ENCODE measurements at regions of chr11 and their contacts with region 1.

Region 1: GRCh38 chr11:74696932-74697687 is 34.1 kb downstream of the CHRDL2 start:
- DNase-seq: no peak
- H3K4me3 ChIP-seq: peak overlapping the region in 1 of 4 experiments; percentile 40; a peak in 2 of 8 replicates
- H3K27ac ChIP-seq: no peak overlapping the region
- H3K4me1 ChIP-seq: peaks cover 0 to 8% (median 3%) of the 10 kb centered on the region in 4 experiments; a peak in 3 of 7 replicates
- H3K27me3 ChIP-seq: no peaks in the 10 kb centered on the region; a peak in 2 of 7 replicates
- CTCF ChIP-seq: no peak
- EP300 ChIP-seq: no peak
- POLR2A ChIP-seq: no peak
- RAD21 ChIP-seq: no peak

Region 2: DNA sequence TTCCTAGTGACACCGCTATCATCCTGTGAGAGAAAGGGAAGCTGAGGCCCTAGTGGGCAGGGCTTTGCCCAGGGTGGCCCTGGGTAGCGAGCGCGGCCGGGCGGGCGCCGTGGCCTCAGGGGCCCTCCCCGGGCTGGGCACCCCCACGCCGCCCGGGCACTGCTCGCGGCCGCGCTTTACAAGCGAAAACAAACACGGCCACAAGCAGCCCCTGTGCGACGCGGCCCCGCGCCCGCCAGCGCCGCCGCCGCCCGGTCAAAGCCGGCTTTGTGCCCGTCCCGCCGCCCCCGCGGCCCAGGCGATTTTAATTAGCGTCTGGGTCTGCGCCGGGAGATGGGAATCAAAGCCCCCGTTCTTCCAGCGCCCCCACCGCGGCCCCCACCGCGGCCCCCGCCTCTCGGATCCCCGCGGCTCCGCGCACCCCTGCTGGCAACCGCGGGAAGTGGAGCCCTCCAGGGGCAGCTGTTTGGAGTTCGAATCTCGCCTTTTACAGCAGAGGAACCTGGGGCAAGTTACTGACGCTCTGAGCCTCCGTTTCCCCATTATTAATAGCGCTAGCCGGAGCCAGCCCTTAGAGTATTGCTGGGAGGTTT is 13.7 kb before region 1 on chr11:
- CTCF ChIA-PET with region 1: interaction called, 72 read pairs
- POLR2A ChIA-PET with region 1: interaction called, 4 read pairs
- DNase-seq: peak in 1 of 2 experiments; percentile 75
- H3K4me3 ChIP-seq: peak overlapping the region; percentile 40 to 64 (median 45)
- H3K27ac ChIP-seq: no peak overlapping the region
- H3K4me1 ChIP-seq: peaks cover 5 to 8% (median 7%) of the 10 kb centered on the region in 4 experiments; a peak in 6 of 7 replicates
- H3K27me3 ChIP-seq: peaks cover 0 to 12% (median 7%) of the 10 kb centered on the region in 4 experiments; a peak in 5 of 7 replicates
- CTCF ChIP-seq: peak in 2 of 3 experiments; percentile 9 to 29; a peak in 1 of 4 replicates
- EP300 ChIP-seq: no peak
- POLR2A ChIP-seq: no peak
- RAD21 ChIP-seq: no peak

Region 3: GRCh38 chr11:74710281-74710938 is 13.3 kb after region 1 on chr11:
- CTCF ChIA-PET with region 1: interaction called, 30 read pairs
- POLR2A ChIA-PET with region 1: no interaction called
- DNase-seq: no peak
- H3K4me3 ChIP-seq: no peak overlapping the region
- H3K27ac ChIP-seq: no peak overlapping the region
- H3K4me1 ChIP-seq: peaks cover 0 to 6% (median 3%) of the 10 kb centered on the region in 4 experiments; a peak in 3 of 7 replicates
- H3K27me3 ChIP-seq: no peaks in the 10 kb centered on the region
- CTCF ChIP-seq: no peak
- EP300 ChIP-seq: no peak
- POLR2A ChIP-seq: no peak
- RAD21 ChIP-seq: no peak

Region 4: GRCh38 chr11:74739546-74740270 is 42.6 kb after region 1 on chr11:
- CTCF ChIA-PET with region 1: interaction called, 26 read pairs
- POLR2A ChIA-PET with region 1: no interaction called
- DNase-seq: peak in 1 of 2 experiments; percentile 46
- H3K4me3 ChIP-seq: no peak overlapping the region
- H3K27ac ChIP-seq: no peak overlapping the region
- H3K4me1 ChIP-seq: no peaks in the 10 kb centered on the region
- H3K27me3 ChIP-seq: no peaks in the 10 kb centered on the region; a peak in 1 of 7 replicates
- CTCF ChIP-seq: peak; percentile 80 to 88 (median 86)
- EP300 ChIP-seq: no peak
- POLR2A ChIP-seq: no peak
- RAD21 ChIP-seq: peak; percentile 67 to 83

Region 5: DNA sequence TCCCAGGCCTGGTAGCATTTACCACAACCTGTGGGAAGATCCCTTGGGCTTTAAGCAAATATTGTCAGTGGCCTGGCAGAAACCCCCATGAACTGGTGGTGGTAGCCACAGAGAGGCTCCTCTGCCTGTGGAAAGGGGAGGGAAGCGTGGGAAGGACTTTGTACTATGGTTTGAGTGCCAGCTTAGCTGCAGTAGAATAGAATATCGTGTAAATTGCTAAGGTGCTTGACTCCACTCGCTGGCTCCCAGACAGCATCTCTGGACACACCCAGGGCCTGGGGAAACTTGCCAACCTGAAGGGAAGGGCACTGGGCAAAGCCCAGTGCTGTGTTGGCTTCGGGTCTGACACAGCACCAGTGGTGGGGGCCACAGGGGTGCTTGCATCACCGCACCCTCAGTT is 199.2 kb after region 1 on chr11:
- CTCF ChIA-PET with region 1: no interaction called
- POLR2A ChIA-PET with region 1: no interaction called
- DNase-seq: no peak
- H3K4me3 ChIP-seq: no peak overlapping the region
- H3K27ac ChIP-seq: no peak overlapping the region
- H3K4me1 ChIP-seq: no peaks in the 10 kb centered on the region
- H3K27me3 ChIP-seq: no peaks in the 10 kb centered on the region
- CTCF ChIP-seq: no peak
- EP300 ChIP-seq: no peak
- POLR2A ChIP-seq: no peak
- RAD21 ChIP-seq: no peak

Region 6: DNA sequence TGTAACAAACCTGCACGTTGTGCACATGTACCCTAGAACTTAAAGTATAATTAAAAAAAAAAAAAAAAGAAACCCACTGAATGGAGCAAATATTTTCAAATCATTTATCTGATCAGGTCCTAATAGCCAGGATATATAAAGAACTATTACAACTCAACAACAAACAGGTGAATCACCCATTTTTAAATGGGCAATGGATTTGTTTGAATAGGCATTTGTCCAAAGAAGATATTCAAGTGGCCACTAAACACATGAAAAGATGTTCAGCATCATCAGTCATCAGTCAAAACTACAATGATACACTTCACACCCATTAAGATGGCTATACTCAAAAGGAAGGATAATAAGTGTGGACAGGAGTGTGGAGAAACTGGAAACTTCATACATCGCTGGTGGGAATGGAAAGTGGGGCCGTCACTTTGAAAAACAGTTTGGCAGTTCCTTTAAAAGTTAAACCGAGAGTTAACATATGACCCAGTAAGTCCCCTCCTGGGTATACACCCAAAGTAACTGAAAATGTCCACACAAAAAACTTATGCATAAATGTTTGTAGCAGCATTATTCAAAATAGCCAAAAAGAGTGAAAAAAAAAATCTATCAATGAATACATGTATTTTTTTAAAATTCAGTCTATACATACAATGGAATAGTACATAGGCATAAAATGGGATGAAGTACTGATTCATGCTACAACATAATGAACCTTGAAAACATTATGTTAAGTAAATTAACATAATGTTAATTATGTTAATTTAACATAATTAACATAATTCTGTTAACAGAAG is 601.3 kb after region 1 on chr11:
- CTCF ChIA-PET with region 1: no interaction called
- POLR2A ChIA-PET with region 1: no interaction called
- DNase-seq: no peak
- H3K4me3 ChIP-seq: no peak overlapping the region
- H3K27ac ChIP-seq: no peak overlapping the region
- H3K4me1 ChIP-seq: peaks cover 0 to 3% (median under 1%) of the 10 kb centered on the region in 4 experiments; a peak in 3 of 7 replicates
- H3K27me3 ChIP-seq: no peaks in the 10 kb centered on the region
- CTCF ChIP-seq: no peak
- EP300 ChIP-seq: no peak
- POLR2A ChIP-seq: no peak
- RAD21 ChIP-seq: no peak